Posterior vena cava (tissue), 2 donors: ENCODE measurements at regions of chrX and their contacts with region 1.

Region 1: DNA sequence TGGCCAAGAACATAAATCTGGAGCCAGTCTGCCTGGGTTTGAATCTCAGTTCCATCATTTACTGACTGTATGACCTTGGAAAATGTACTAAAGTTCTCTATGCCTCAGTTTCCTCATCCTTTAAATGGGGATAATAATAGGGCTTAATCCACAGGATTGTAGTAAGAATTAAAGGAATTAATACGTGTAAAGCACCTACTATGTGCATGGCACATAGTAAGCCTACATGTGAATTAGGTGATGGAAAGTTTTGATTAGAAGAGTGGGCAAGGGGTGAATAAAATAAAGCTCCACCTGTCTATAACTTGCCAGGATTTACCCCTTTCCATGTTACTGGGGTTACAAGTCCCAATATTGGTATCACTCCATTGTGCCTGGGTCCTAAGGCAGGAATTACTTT is 35.8 kb upstream of the IL13RA2 start:
- DNase-seq: no peak

Region 2: GRCh38 chrX:114976292-114976691 is 76.9 kb before region 1 on chrX:
- intact Hi-C with region 1: loop called in 1 of 2 experiments (anchors 2 kb)
- DNase-seq: no peak

Region 3: DNA sequence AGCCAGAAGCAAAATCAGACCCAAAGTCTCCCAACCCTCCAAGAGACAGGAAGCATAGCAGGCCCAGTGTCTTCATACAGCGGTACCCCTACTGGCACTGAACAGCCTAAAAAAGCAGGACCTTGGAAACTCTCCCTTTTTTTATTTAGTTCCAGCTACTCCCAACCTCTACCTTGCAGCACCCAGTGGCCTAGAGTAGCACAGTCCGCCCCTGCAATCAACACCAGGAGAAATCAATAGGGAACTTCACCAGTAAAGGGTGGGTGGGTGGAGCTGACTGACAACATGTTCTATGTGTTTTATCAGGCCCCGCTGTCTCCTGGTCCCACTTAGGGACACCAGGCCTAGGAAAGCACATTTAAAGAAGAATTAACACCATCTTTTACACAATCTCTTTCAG is 1788.1 kb after region 1 on chrX:
- intact Hi-C with region 1: no loop called
- DNase-seq: no peak